Heart left ventricle (tissue), 16 donors: ENCODE measurements at regions of chr13 and their contacts with region 1.

Region 1: DNA sequence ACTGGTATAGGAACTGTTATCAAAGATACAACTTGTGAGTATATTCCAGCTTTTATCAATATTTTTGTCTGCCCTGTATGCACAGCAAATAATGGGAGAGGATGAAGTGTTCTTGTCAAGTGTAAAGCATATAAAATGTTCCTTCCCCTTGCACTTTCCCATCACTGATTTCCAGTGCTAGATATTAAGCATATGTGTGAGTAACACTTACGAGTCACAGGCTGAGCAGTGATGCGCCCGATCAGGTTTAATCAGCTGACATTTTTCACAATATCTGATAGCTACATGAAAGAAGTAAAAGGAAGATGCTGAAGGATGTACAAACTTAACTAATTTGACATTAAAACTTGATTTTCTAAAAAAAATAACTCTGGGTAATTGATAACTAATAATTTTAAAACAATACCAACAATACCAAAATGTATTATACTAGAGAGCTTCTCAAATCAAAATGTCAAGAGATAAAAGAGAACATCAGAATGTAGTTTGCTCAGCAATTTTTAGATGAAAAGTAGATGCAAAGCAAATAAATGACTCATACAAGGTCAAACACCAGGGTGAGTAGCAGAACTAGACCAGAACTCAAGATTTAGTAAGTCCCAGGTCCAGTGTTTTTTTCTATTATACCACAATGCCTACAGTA is 56.4 kb downstream of the ZDHHC20 start:
- DNase-seq: no peak
- ATAC-seq: no peak
- H3K4me3 ChIP-seq: no peak overlapping the region
- H3K27ac ChIP-seq: no peak overlapping the region
- H3K4me1 ChIP-seq: peaks cover 0 to 18% (median 0%) of the 10 kb centered on the region in 12 donors
- H3K27me3 ChIP-seq: no peaks in the 10 kb centered on the region
- CTCF ChIP-seq: no peak
- POLR2A ChIP-seq: no peak

Region 2: DNA sequence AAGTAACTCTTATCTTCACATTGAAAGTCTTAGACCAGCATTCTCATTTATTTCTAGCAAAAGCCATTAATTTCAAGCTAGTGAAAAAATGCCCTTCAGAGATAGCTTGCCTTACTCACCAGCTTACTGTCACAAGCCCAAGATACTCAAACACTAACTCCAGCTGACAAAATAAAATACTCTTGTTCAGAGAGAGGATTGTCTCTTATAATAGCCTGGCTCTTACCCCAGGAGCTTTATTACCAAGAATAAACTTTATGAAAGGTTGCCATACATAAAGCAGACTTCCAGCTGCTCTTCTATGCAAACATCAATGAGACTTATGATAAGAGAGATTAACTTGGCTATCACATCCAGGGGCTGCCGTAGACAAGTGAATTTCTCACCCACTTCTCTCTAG is 553.8 kb before region 1 on chr13:
- intact Hi-C with region 1: no loop called
- DNase-seq: no peak
- ATAC-seq: peak; percentile 68 to 88 (median 79)
- H3K4me3 ChIP-seq: peak overlapping the region in 1 of 12 donors; percentile 24
- H3K27ac ChIP-seq: peak overlapping the region in 11 of 12 donors; percentile 8 to 61 (median 43)
- H3K4me1 ChIP-seq: peaks cover 0 to 37% (median 11%) of the 10 kb centered on the region in 12 donors
- H3K27me3 ChIP-seq: no peaks in the 10 kb centered on the region
- CTCF ChIP-seq: no peak
- POLR2A ChIP-seq: no peak

Region 3: DNA sequence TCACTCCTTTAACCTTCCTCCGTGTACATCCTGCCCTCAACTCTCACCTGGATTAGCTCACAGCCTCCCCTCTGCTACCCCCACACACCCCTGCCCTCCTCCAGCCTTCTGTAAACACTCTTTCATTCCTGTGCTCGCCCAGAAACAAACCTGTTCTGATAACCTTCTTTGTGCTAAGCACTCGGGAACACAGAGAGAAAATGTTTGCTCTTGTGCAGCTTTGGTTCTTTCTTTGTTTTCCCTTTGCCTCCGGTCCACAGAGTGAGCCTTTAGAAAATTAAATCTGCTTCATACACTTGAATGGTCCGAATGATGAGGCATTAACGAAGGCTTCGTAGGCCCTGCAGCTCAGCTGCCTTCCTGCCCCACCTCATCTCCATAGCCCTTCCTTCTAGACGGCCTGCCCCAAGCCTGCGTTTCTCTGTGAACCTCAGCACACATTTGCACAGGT is 63.0 kb after region 1 on chr13:
- intact Hi-C with region 1: loop called in 1 of 10 experiments (anchors 10 kb)
- DNase-seq: no peak
- ATAC-seq: no peak
- H3K4me3 ChIP-seq: no peak overlapping the region
- H3K27ac ChIP-seq: no peak overlapping the region
- H3K4me1 ChIP-seq: no peaks in the 10 kb centered on the region
- H3K27me3 ChIP-seq: no peaks in the 10 kb centered on the region
- CTCF ChIP-seq: no peak
- POLR2A ChIP-seq: no peak